ENCODE measurements at regions of chr13 and their contacts with region 1.

Region 1: DNA sequence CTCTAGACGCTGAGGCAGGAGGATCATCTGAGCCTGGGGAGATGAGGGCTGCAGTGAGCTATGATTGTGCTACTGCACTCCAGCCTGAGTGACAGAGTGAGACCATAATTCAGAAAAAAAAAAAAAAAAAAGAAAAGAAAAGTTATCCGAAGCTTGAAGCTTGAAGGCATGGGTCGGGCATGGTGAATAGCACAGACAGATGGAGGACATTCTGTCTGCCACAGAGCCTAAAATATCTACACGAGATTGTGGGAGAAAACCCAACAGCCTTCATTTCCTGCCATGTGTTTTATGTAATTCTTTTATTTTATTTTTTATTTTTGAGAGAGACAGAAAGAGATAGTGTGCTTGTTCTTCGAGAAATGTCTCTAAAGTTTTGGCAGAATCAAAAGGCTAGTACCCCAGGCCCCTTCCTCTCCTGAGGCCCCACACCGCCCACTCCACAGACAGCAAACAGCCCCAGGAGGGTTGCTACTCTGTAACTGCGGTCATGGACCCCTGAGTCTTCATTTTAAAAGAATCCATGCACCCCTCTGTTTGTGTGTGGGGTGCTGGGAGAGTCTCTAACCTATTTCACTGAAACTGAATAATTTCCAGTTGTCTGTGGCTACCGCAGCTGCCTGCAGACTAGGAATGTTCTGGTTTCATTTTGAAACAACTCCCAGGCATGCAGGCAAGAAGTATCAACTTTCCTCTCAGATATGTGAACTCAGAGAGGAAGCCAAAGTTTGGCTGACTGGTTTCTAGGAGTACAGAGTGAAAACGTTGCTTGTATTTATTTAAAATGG is 38.4 kb upstream of the RCBTB2 start:
- DNase-seq: no peak
- ATAC-seq: peak; percentile 67 to 76
- H3K4me3 ChIP-seq: peak overlapping the region; percentile 11
- H3K27ac ChIP-seq: peak overlapping the region; percentile 67
- H3K4me1 ChIP-seq: peaks cover 14% of the 10 kb centered on the region
- H3K27me3 ChIP-seq: no peaks in the 10 kb centered on the region

Region 2: GRCh38 chr13:48199499-48199898 is 371.8 kb before region 1 on chr13:
- intact Hi-C with region 1: no loop called
- DNase-seq: no peak
- ATAC-seq: no peak
- H3K4me3 ChIP-seq: no peak overlapping the region
- H3K27ac ChIP-seq: no peak overlapping the region
- H3K4me1 ChIP-seq: no peaks in the 10 kb centered on the region
- H3K27me3 ChIP-seq: no peaks in the 10 kb centered on the region

Region 3: DNA sequence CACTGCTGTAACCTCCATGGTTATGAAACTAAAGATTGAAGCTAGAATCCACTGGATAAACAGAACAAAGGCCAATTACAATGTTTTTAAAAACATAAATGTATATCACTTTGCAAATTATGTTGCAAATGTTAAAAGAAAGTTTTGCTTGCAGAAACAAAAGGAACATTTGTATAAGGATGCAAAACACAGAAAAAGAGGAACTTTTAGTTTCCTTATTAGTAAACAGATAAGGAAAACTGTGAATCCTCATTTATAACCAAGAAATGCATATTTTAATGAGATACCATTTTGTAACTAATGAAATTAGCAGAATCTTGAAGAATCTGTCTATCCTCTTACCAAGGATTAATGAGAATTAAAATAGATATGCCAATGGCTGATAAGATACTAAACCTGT is 190.7 kb before region 1 on chr13:
- intact Hi-C with region 1: no loop called
- DNase-seq: no peak
- ATAC-seq: no peak
- H3K4me3 ChIP-seq: no peak overlapping the region
- H3K27ac ChIP-seq: no peak overlapping the region
- H3K4me1 ChIP-seq: no peaks in the 10 kb centered on the region
- H3K27me3 ChIP-seq: no peaks in the 10 kb centered on the region

Region 4: DNA sequence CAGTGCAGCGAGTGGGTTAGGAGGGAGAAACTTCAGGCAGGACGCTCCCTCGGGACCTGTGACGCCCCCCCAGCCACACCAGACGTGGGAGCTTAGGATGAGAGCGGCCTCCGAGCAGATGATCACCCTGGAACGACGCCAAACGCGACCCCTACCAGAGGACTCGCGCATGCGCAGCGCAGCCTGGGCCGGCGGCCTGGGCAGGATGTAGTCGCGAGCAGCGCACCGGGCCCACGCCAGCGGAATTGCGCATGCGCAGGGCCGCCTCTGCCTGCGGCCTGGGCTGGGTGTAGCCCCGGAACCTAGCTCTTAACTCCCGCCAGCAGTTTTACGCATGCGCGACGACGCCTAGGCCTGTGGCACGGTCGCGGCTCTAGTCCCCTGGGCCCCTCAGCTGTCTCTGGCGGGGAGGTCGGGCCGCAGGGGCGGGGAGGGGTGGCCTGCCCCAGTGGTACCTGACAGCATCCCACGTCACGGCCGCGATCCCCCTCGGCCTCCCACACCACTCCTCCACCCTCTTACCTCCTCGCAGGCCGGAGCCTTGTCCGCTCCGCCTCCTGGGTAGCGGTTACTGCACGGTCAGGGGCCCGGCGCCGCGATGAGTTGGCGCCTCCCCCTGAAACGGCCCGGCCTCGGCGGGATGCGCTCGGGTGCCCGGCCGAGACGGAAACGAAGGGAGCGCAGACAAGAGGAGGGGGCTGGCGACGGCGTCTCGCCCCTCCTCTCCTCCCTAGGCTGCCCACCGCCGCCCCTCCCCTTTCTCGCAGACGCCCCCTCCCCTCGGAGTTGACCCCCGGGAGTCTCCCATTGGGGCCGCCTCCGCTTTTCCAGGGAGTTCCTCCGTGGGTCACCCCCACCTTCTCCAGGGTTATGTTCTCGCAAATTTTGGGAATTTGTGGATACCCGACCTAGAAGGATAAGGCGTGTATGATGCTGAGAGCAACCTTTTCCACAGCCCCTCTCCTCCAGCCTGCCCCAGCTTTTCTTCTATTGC is 38.5 kb before region 1 on chr13 and contains the start of gene RCBTB2:
- intact Hi-C with region 1: loop called in 1 of 4 experiments (anchors 5 kb)
- DNase-seq: peak; percentile 100
- ATAC-seq: peak; percentile 98
- H3K4me3 ChIP-seq: peak within 1 kb of the TSS; percentile 68
- H3K27ac ChIP-seq: peak within 1 kb of the TSS; percentile 83
- H3K4me1 ChIP-seq: no peaks in the 10 kb centered on the region
- H3K27me3 ChIP-seq: no peaks in the 10 kb centered on the region
- total RNA-seq, gene RCBTB2: 9.0 to 17.3 (median 17.0) TPM

Measured in right cardiac atrium (tissue), 5 donors.